MCF 10A (cell line): ENCODE measurements at regions of chr1 and their contacts with region 1.

Region 1: GRCh38 chr1:234478481-234479309 is at the start of gene TARBP1:
- DNase-seq: peak; percentile 89
- H3K4me3 Mint-ChIP-seq: peak within 1 kb of the TSS; percentile 77
- H3K27ac Mint-ChIP-seq: no peak within 1 kb of the TSS
- H3K4me1 Mint-ChIP-seq: peaks cover 31% of the 10 kb centered on the region
- H3K27me3 Mint-ChIP-seq: peaks cover 23% of the 10 kb centered on the region
- CTCF ChIP-seq: no peak
- total RNA-seq, gene TARBP1: 45.5 and 52.5 TPM in 2 replicates

Region 2: DNA sequence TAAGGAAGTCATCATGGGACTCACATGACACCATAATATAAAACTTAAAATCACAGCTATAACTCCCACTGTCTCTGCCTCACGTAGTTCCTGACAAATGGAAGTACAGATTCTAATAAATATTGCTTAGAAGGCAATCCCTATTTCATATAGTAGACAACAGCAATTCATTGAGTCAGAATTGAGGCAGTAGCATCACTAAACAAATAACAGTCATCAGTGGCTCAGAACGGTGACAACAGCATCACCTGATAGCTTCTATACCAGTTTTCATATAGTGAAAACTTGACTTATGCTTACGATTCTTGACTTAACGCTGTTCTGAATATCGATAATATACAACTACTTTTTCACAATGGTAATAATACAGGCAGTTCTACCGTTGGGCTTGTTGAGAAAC is 11.8 kb before region 1 on chr1:
- CTCF ChIA-PET with region 1: interaction called, 6 read pairs
- POLR2A ChIA-PET with region 1: interaction called, 29 read pairs
- intact Hi-C with region 1: no loop called
- DNase-seq: no peak
- H3K4me3 Mint-ChIP-seq: no peak overlapping the region
- H3K27ac Mint-ChIP-seq: no peak overlapping the region
- H3K4me1 Mint-ChIP-seq: no peaks in the 10 kb centered on the region
- H3K27me3 Mint-ChIP-seq: no peaks in the 10 kb centered on the region
- CTCF ChIP-seq: no peak